Activated CD8-positive, alpha-beta memory T cell treated with anti-CD3 and anti-CD28 coated beads, Interleukin-2, amount 10 ng/mL, durations not matched to agents 7 days and 5 days (primary cell): ENCODE measurements at regions of chr3 and their contacts with region 1.

Region 1: DNA sequence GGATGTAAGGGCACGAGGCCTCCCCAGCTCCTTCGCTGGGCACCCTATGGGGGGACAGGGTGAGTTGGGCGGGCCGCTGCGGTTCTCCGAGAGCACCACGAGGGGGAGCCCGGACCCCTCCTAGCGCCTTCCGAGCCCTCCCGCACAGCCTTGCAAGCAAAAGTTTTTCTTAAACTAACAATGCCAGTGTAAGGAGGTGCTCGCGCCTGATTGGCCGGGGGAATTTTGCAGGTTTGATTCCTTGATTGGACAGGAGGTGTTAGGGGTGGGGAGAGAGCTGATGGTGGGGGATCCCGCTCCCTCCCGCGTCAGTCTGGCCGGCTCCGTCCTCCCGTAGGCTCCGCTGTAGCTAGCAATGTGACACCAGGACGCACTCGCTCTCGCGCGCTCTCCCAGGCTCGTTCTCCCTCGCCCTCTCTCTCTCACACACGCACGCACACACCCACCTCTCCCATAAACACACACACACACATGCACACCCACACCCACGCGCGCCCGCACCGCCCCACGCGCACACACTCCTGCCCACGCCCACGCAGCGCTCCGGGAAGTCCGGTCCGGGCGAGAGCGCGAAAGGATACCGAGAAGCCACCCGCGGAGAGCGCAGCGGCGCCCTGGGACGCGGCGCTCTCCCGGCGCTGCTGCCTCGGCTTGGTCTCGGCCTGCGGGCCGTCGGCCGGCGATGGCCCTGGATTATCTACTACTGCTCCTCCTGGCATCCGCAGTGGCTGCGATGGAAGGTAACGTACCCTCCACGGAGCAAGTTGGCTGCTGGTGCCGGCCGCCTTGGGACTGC is at the start of gene EPHB1:
- DNase-seq: peak; percentile 83
- ATAC-seq: peak; percentile 85
- H3K4me3 Mint-ChIP-seq: peak within 1 kb of the TSS; percentile 76
- H3K27ac Mint-ChIP-seq: peak within 1 kb of the TSS; percentile 31
- H3K4me1 Mint-ChIP-seq: peaks cover 19% of the 10 kb centered on the region
- H3K27me3 Mint-ChIP-seq: peaks cover 79% of the 10 kb centered on the region
- total RNA-seq, gene EPHB1: 0.35 to 2.2 TPM

Region 2: GRCh38 chr3:134838599-134838998 is 43.5 kb after region 1 on chr3:
- CTCF ChIA-PET with region 1: interaction called, 16 read pairs
- DNase-seq: no peak
- ATAC-seq: no peak
- H3K4me3 Mint-ChIP-seq: no peak overlapping the region
- H3K27ac Mint-ChIP-seq: no peak overlapping the region
- H3K4me1 Mint-ChIP-seq: no peaks in the 10 kb centered on the region
- H3K27me3 Mint-ChIP-seq: peaks cover 28% of the 10 kb centered on the region

Region 3: GRCh38 chr3:135240426-135240825 is 445.3 kb after region 1 on chr3:
- CTCF ChIA-PET with region 1: interaction called, 13 read pairs
- DNase-seq: no peak
- ATAC-seq: peak; percentile 30
- H3K4me3 Mint-ChIP-seq: no peak overlapping the region
- H3K27ac Mint-ChIP-seq: no peak overlapping the region
- H3K4me1 Mint-ChIP-seq: no peaks in the 10 kb centered on the region
- H3K27me3 Mint-ChIP-seq: no peaks in the 10 kb centered on the region

Region 4: DNA sequence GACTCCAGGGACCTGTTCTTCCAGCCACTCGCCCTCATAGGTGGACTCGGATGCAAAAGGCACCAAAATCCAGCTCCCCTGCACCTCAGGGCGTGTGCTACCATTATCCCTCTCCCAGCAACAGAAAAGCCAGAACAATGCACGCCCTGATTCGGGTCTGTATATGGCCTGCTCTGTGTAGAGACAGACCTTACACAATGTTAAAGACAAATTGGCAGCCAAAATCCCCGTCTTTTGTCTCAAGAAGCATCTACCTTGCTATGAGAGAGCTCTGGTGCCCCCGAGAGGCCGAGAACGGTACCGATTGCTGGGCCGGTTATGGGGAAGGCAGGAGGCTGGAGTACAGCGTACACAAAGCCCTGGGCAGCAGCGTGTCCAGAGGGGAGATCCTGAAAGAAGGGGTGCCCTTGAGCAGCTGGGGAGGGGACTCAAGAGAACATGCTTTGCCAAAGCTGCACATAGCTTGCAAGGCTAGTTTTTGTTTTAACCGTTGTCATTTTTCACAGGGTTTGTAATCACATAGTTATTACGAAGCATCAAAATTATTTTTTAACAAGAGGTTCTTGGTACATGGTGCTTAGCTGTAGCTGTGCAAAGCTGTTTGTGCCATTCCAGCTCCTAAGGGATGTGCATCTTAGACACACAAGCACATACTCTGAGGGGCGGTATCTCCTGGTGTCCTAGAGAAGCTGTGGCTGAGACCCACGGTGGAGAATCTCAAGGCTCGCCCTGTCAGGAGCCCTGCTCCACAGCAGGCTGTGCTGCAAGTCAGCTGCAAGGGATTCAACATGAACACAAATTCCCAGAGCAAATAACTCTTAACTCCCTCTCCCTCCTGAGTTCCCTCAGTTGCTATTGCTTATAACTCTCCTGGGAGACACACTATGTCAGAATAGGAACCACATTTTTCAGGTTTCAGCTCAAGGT is 708.9 kb after region 1 on chr3:
- CTCF ChIA-PET with region 1: interaction called, 10 read pairs
- DNase-seq: peak; percentile 42
- ATAC-seq: no peak
- H3K4me3 Mint-ChIP-seq: no peak overlapping the region
- H3K27ac Mint-ChIP-seq: no peak overlapping the region
- H3K4me1 Mint-ChIP-seq: no peaks in the 10 kb centered on the region
- H3K27me3 Mint-ChIP-seq: no peaks in the 10 kb centered on the region